ENCODE measurements at regions of chr15 and their contacts with region 1.

Region 1: DNA sequence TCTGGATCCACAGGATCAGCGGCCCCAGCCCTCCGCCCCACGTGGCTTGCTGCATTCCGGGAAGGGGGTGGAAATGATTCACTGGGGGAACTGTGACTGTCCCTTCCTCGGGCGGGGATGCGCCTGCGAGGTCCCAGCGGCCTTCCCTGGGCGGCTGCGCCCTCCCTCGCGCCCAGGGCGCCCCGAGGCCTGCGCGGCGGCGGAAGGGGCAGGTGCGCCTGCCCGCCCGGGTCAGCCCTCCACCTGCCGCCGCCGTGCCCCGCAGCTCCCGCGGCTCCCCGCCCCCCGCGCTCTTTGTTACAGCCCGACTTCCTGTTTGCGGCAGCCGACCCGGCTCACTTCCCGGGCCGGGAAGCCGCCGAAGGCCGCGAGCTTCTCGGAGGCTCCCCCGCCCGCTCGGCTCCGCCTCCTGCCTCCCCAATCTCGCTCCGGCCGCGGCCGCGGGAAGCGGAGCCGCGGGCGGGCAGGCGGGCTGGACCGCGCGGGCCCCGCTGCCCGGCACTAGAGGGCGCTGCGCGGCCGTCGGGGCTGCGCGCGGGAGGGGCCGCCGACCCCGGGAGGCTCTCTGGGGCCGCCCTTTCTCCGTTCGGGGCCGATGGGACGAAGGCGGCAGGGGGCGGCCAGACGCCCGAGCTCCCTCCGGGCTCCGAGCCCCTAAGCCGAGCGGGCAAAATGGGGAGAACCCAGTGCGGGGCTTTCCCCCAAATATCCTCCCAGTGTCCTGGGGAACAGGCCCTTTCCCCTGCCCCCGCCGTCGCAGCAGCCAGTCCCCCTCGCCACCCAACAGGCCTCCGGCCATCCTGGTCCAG is 11.5 kb upstream of the CHAC1 start:
- DNase-seq: peak; percentile 89
- ATAC-seq: peak; percentile 83
- H3K4me3 Mint-ChIP-seq: peak overlapping the region; percentile 62
- H3K27ac Mint-ChIP-seq: no peak overlapping the region
- H3K4me1 Mint-ChIP-seq: peaks cover 25% of the 10 kb centered on the region
- H3K27me3 Mint-ChIP-seq: peaks cover 36% of the 10 kb centered on the region
- CTCF ChIP-seq: peak; percentile 73

Region 2: GRCh38 chr15:40906091-40906990 is 35.4 kb before region 1 on chr15:
- CTCF ChIA-PET with region 1: interaction called, 62 read pairs
- POLR2A ChIA-PET with region 1: interaction called, 7 read pairs
- DNase-seq: peak; percentile 95
- ATAC-seq: peak; percentile 82
- H3K4me3 Mint-ChIP-seq: peak overlapping the region; percentile 62
- H3K27ac Mint-ChIP-seq: no peak overlapping the region
- H3K4me1 Mint-ChIP-seq: peaks cover 14% of the 10 kb centered on the region
- H3K27me3 Mint-ChIP-seq: no peaks in the 10 kb centered on the region
- CTCF ChIP-seq: peak; percentile 83

Region 3: GRCh38 chr15:40928821-40929659 is 12.7 kb before region 1 on chr15 and contains the start of gene DLL4:
- CTCF ChIA-PET with region 1: interaction called, 203 read pairs
- POLR2A ChIA-PET with region 1: interaction called, 43 read pairs
- DNase-seq: peak; percentile 84
- ATAC-seq: peak; percentile 45
- H3K4me3 Mint-ChIP-seq: peak within 1 kb of the TSS; percentile 80
- H3K27ac Mint-ChIP-seq: no peak within 1 kb of the TSS
- H3K4me1 Mint-ChIP-seq: peaks cover 30% of the 10 kb centered on the region
- H3K27me3 Mint-ChIP-seq: peaks cover 97% of the 10 kb centered on the region
- CTCF ChIP-seq: no peak
- total RNA-seq, gene DLL4: 0.94 to 1.6 TPM (median 1.1 TPM) in 3 replicates

Region 4: DNA sequence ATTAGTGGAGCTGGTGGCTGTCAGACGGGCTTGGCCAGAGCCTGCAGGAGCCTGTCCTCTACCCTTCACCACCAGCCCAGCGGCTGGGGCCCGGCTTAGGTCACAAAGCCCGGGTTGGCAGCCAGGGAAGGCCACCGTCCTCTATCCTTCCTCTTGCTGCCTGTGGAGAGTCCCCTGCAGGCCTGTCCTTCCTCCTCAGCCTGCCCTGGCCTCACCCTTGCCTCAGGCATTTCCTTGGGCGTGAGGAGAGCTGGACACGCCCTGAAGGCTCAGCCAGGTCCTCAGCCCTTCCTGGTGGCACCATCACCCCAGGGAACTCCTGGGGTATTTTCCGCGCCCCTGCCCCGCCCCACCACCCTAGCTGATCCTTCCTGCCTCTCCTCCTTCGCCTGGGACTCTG is 19.2 kb after region 1 on chr15:
- CTCF ChIA-PET with region 1: interaction called, 99 read pairs
- POLR2A ChIA-PET with region 1: interaction called, 11 read pairs
- DNase-seq: no peak
- ATAC-seq: no peak
- H3K4me3 Mint-ChIP-seq: no peak overlapping the region
- H3K27ac Mint-ChIP-seq: no peak overlapping the region
- H3K4me1 Mint-ChIP-seq: peaks cover 30% of the 10 kb centered on the region
- H3K27me3 Mint-ChIP-seq: no peaks in the 10 kb centered on the region
- CTCF ChIP-seq: no peak

Region 5: GRCh38 chr15:41018502-41018901 is 76.8 kb after region 1 on chr15:
- CTCF ChIA-PET with region 1: interaction called, 24 read pairs
- POLR2A ChIA-PET with region 1: no interaction called
- DNase-seq: no peak
- ATAC-seq: no peak
- H3K4me3 Mint-ChIP-seq: no peak overlapping the region
- H3K27ac Mint-ChIP-seq: no peak overlapping the region
- H3K4me1 Mint-ChIP-seq: no peaks in the 10 kb centered on the region
- H3K27me3 Mint-ChIP-seq: no peaks in the 10 kb centered on the region
- CTCF ChIP-seq: no peak